MCF 10A (cell line): ENCODE measurements at regions of chr3 and their contacts with region 1.

Region 1: DNA sequence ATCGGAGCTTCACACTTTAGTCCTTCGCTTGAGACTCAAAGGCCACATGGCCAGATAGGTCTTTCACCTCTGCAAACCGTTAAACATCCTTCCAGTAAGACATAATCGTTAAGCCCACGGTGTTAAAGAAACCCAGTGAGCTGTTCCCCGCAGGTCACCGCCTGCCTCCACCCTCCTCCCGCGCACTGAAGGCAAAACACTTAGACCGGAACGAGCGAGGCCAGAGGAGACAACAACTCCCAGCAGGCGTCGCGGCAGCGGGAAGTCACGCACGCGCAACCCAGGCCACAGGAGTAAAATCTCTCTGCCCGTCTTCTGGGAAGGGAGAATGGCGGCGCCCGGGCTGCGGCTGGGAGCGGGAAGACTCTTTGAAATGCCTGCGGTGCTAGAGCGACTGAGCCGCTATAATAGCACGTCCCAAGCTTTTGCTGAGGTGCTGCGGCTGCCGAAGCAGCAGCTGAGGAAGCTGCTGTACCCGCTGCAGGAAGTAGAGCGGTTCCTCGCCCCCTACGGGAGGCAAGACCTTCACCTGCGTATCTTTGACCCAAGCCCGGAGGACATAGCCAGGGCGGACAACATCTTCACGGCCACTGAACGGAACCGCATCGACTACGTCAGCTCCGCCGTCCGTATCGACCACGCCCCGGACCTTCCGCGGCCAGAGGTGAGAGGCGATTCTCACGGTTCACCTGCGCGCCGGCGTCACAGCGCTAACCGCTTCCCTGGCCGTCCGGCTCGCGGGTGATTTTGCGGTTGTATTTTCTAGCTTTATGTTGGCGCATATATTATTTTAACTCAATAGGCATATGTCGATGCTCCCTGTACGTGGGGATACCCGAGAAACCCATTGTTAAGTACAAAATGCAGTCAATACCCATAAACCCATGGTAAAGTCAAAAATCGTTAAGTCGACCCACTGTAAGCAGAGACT is at the start of gene GTPBP8:
- DNase-seq: peak; percentile 92
- H3K4me3 Mint-ChIP-seq: peak within 1 kb of the TSS; percentile 78
- H3K27ac Mint-ChIP-seq: peak within 1 kb of the TSS; percentile 91
- H3K4me1 Mint-ChIP-seq: peaks cover 18% of the 10 kb centered on the region
- H3K27me3 Mint-ChIP-seq: peaks cover 9% of the 10 kb centered on the region
- CTCF ChIP-seq: no peak
- total RNA-seq, gene GTPBP8: 9.3 and 10.7 TPM in 2 replicates

Region 2: GRCh38 chr3:112561731-112562688 is 428.9 kb before region 1 on chr3 and contains the starts of genes ATG3 and SLC35A5:
- CTCF ChIA-PET with region 1: no interaction called
- POLR2A ChIA-PET with region 1: interaction called, 35 read pairs
- intact Hi-C with region 1: no loop called
- DNase-seq: peak; percentile 99
- H3K4me3 Mint-ChIP-seq: peak within 1 kb of the TSS; percentile 96
- H3K27ac Mint-ChIP-seq: peak within 1 kb of the TSS; percentile 98
- H3K4me1 Mint-ChIP-seq: peaks cover 12% of the 10 kb centered on the region
- H3K27me3 Mint-ChIP-seq: no peaks in the 10 kb centered on the region
- CTCF ChIP-seq: no peak
- total RNA-seq, gene ATG3: 87.8 and 97.2 TPM in 2 replicates
- total RNA-seq, gene SLC35A5: 23.3 and 26.7 TPM in 2 replicates

Region 3: DNA sequence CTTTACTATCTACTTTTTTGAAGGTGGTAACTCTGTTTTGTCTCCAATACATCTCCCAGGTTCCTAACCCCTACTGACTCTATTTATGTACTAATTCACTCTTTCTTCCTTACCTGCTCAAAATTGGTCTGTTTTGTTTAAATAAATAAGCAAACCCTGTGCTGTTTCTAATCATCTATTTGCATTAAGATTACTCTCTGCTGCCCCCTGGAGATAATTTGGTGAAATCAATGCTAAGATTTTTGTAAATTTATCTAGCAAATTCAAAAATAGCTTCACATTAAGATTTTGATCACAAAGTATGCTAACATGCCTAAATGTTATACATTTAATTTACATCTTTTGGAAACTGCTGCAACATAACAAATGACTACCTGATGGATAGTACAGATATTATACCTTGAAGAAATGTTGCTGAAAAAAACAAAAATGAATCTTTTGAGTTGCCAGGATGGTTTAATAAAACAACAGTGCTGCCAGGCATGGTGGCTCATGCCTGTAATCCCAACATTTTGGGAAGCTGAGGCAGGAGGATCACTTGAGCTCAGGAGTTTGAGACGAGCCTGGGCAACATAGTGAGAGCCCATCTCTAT is 11.6 kb before region 1 on chr3:
- CTCF ChIA-PET with region 1: interaction called, 10 read pairs
- POLR2A ChIA-PET with region 1: interaction called, 4 read pairs
- intact Hi-C with region 1: no loop called
- DNase-seq: peak; percentile 56
- H3K4me3 Mint-ChIP-seq: no peak overlapping the region
- H3K27ac Mint-ChIP-seq: no peak overlapping the region
- H3K4me1 Mint-ChIP-seq: no peaks in the 10 kb centered on the region
- H3K27me3 Mint-ChIP-seq: peaks cover 20% of the 10 kb centered on the region
- CTCF ChIP-seq: peak; percentile 41

Region 4: DNA sequence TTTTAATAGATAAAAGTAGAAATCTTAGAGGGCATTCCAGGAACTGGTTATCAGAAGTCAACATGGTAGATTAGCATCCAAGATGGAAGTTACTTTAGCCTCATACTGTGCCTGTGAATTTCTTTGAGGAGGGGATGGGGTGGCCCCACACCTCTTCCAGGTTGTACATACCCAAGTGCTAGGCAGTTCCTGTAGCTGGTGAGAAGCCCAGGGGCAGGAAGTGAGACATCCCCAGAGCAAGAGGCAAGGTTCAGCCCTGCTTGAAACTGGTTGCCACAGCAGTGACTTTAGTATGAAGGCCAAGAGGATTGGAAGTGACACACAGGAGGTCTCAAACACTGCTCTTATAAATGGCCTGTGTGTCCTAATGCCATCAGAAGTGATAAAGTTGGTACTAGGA is 11.7 kb after region 1 on chr3:
- CTCF ChIA-PET with region 1: interaction called, 3 read pairs
- POLR2A ChIA-PET with region 1: interaction called, 21 read pairs
- intact Hi-C with region 1: no loop called
- DNase-seq: no peak
- H3K4me3 Mint-ChIP-seq: no peak overlapping the region
- H3K27ac Mint-ChIP-seq: no peak overlapping the region
- H3K4me1 Mint-ChIP-seq: no peaks in the 10 kb centered on the region
- H3K27me3 Mint-ChIP-seq: no peaks in the 10 kb centered on the region
- CTCF ChIP-seq: no peak